BJ (cell line): ENCODE measurements at regions of chr20 and their contacts with region 1.

Region 1: DNA sequence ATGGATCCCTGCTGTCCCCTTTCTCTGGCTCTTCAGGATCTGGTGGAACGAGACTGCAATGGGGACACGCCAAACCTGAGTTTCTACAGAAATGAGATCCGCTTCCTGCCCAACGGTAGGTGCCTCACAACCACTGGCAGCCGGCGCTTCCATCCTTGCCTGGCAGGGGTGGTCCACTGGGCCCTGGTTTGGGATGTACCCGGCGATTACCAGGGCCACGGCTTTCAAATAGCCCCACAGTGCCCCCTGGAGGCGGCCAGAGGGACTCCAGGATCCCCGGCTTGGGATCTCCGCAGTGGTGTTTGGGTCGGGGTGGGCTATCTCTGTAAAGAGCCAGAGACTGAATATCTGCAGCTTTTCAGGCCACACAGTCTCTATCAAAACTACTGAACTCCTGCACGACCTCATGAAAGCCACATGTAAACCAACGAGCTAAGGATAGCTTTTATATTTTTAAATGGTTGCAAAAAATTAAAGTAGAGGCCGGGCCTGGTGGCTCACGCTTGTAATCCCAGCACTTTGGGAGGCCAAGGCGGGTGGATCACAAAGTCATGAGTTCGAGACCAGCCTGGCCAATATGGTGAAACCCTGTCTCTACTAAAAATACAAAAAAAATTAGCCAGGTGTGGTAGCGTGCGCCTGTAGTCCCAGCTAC is 3.7 kb downstream of the OGFR start:
- DNase-seq: no peak
- H3K4me3 ChIP-seq: no peak overlapping the region
- H3K27me3 ChIP-seq: no peaks in the 10 kb centered on the region
- CTCF ChIP-seq: peak; percentile 96

Region 2: GRCh38 chr20:62668441-62669027 is 139.8 kb before region 1 on chr20:
- CTCF ChIA-PET with region 1: interaction called, 15 read pairs
- POLR2A ChIA-PET with region 1: no interaction called
- DNase-seq: no peak
- H3K4me3 ChIP-seq: no peak overlapping the region
- H3K27me3 ChIP-seq: no peaks in the 10 kb centered on the region
- CTCF ChIP-seq: peak; percentile 85

Region 3: DNA sequence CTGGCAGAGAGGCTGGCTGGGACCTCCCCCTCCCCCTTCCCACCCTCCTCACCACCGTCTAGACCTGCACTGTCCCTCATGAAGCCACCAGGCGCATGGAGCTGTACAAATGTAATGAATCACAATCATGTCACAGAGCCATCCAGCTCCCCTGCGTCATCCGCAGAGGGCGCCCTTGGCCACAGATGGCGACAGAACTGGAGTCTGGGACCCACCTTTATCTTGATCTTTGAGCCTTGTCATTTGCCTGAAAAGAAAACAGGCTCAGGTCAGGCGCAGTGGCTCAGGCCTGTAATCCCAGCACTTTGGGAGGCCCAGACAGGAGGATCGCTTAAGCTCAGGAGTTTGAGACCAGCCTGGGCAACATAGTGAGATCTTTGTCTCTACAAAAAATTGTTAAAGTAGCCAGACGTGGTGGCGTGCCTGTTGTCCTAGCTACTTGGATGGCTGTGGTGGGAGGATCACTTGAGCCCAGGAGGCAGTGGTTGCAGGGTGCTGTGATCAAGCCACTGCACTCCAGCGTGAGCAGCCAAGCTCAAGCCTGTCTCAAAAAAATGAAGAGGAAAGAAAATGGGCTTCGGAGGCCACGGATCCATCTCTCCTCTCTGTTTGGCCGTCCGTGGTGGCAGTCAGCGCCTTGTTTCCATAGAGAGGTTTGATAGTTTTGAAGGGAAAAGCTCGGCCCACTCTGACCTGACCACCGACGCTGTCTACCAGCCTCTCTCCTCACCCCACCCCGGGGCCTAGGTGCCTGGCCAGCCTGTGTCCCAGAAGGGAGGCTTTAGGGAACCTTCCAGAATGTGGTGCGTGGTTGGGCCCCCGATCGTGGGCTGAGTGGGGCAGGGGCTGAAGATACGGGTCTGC is 14.7 kb after region 1 on chr20:
- CTCF ChIA-PET with region 1: interaction called, 27 read pairs
- POLR2A ChIA-PET with region 1: no interaction called
- DNase-seq: no peak
- H3K4me3 ChIP-seq: no peak overlapping the region
- H3K27me3 ChIP-seq: no peaks in the 10 kb centered on the region
- CTCF ChIP-seq: peak; percentile 27

Region 4: GRCh38 chr20:62914970-62915457 is 106.7 kb after region 1 on chr20:
- CTCF ChIA-PET with region 1: no interaction called
- POLR2A ChIA-PET with region 1: no interaction called
- DNase-seq: no peak
- H3K4me3 ChIP-seq: no peak overlapping the region
- H3K27me3 ChIP-seq: no peaks in the 10 kb centered on the region
- CTCF ChIP-seq: no peak

Region 5: GRCh38 chr20:62961310-62961783 is 153.0 kb after region 1 on chr20:
- CTCF ChIA-PET with region 1: no interaction called
- POLR2A ChIA-PET with region 1: no interaction called
- DNase-seq: no peak
- H3K4me3 ChIP-seq: no peak overlapping the region
- H3K27me3 ChIP-seq: no peaks in the 10 kb centered on the region
- CTCF ChIP-seq: no peak

Region 6: DNA sequence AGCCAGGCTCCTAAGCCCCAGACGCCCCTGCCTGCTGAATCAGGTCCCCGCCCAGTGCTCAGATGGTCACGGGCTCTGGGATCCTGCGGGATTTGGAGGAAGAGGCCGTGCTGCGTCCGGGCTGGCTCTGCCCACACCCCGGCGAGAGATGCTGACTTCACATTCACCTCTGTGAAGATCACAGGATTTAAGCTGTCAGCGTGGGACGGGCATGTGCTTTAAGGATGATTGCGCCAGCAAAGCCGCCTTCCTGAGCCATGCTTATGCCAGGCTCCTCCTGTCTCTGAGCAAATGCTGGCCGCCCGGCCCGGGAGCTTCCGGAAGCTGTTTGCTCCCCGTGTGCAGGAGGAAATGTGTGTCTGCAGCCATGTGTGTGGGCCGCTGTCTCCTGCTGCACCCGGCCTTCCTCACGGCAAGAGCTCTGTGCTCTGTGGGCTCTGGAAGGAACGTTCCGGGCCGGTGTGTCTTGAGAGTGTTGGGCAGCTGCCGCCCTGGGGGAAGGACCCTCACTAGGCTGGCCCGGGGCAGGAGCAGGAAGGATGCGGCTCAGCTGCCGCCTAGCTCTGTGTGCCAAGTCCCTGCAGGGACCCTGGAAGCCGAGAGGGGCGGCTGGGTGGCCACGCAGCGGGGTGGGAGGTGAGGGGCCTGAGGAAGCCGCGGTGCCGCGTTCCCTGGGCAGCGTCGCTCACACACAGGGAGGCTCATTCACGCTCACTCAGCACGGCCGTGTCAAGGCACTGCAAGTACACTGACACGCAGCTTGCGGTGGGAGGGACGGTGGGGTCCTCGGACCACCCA is 217.4 kb after region 1 on chr20:
- CTCF ChIA-PET with region 1: no interaction called
- POLR2A ChIA-PET with region 1: no interaction called
- DNase-seq: peak; percentile 12
- H3K4me3 ChIP-seq: no peak overlapping the region
- H3K27me3 ChIP-seq: peaks cover 66% of the 10 kb centered on the region
- CTCF ChIP-seq: no peak